GM10248 (cell line): ENCODE measurements at regions of chr15 and their contacts with region 1.

Region 1: GRCh38 chr15:98881526-98882520 is 125.8 kb downstream of the PGPEP1L start:
- DNase-seq: peak; percentile 58
- CTCF ChIP-seq: peak; percentile 52

Region 2: DNA sequence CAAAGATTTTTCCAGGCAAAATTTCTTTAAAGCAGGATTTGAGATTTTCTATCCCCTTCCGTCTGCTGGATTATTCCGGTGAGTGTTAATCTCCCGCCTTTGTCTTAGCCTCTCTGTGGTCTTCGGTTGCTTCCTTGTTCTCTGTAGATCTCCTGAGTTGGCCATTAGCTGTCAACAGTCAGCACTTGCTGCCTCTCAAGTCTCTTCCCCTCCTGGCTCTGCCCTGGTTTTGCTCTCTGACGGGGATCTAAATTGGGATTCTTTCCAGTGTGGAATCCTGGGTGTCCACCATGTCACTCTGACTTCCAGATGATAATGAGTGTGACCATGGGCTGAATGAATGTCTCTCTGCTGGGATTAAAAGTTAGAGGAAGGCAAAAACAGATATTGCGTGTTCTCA is 112.0 kb before region 1 on chr15:
- CTCF ChIA-PET with region 1: no interaction called
- POLR2A ChIA-PET with region 1: no interaction called
- DNase-seq: no peak
- CTCF ChIP-seq: no peak

Region 3: GRCh38 chr15:98893407-98893806 is 11.6 kb after region 1 on chr15:
- CTCF ChIA-PET with region 1: interaction called, 12 read pairs
- POLR2A ChIA-PET with region 1: no interaction called
- DNase-seq: no peak
- CTCF ChIP-seq: no peak

Region 4: GRCh38 chr15:98904544-98904943 is 22.7 kb after region 1 on chr15:
- CTCF ChIA-PET with region 1: interaction called, 14 read pairs
- POLR2A ChIA-PET with region 1: no interaction called
- DNase-seq: peak; percentile 52
- CTCF ChIP-seq: peak; percentile 31

Region 5: GRCh38 chr15:99059010-99059981 is 177.5 kb after region 1 on chr15:
- CTCF ChIA-PET with region 1: interaction called, 11 read pairs
- POLR2A ChIA-PET with region 1: no interaction called
- DNase-seq: peak; percentile 85
- CTCF ChIP-seq: peak; percentile 93

Region 6: DNA sequence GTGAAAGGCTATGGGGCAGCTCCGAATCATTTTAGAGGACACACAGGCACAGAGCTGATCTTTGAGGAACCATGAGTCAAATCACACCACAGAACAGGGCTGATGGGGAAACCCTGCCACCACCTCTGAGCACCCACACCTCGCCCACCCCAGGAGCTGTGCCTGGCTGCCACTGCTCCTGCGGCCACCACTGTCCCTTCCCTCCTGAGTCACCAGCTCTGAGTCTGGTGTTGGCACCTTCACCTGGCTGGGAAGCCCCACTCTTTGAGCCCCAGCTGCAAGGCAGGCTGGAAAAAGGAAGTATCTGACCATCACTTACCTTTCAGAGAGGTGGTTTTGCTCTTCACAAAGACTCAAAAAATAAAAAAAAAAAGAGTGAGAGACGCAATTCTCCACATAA is 620.4 kb after region 1 on chr15:
- CTCF ChIA-PET with region 1: no interaction called
- POLR2A ChIA-PET with region 1: no interaction called
- DNase-seq: peak; percentile 83
- CTCF ChIP-seq: no peak